ENCODE measurements at regions of chr14 and their contacts with region 1.

Region 1: DNA sequence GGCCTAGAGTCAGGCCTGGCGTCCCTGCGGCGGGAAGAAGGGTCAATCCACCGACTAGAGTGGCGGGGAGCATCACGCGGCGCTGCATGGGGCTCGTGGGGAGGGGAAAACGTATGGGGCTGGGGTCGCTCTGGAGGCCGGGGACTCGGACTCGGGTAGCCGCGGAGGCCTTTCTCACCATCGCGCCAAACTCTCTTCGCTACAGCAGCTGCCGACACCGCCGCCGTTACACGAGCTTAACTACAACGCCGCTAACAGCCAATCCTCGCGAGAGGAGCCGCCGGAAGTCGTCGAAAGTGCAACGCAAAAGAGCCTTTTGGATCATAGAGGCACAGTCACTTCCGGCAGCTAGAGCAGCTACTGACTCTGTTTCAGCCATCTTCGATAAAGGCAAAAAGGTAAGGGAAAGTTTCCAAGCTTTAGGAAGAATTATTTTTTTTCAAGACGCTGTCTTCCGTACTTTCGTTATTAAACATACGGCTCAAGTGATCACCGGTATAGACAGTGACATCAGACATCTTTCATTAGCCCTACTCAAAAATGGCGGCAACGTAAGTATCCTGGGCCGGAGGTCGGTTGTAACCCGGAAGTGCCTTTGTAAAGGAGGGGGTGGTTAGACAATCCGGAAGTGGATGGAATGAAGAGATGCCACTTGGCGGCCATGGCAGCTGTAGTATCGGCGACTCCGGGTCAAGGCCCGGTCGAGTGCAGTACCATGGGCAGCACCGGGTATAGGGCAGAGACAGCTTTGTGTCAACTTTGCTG is at the starts of genes ERH and SLC39A9:
- DNase-seq: peak; percentile 98
- H3K4me3 ChIP-seq: peak within 1 kb of the TSS; percentile 71 to 91 (median 84)
- H3K27ac ChIP-seq: peak within 1 kb of the TSS; percentile 88 to 94 (median 90)
- H3K4me1 ChIP-seq: peaks cover 0 to 55% (median 43%) of the 10 kb centered on the region in 4 donors
- H3K27me3 ChIP-seq: no peaks in the 10 kb centered on the region
- CTCF ChIP-seq: no peak
- EP300 ChIP-seq: peak in 1 of 4 donors; percentile 46
- POLR2A ChIP-seq: peak; percentile 29 to 65
- total RNA-seq, gene ERH: 65.6 to 106 (median 87.9) TPM
- total RNA-seq, gene SLC39A9: 39.0 to 47.4 (median 42.0) TPM

Region 2: DNA sequence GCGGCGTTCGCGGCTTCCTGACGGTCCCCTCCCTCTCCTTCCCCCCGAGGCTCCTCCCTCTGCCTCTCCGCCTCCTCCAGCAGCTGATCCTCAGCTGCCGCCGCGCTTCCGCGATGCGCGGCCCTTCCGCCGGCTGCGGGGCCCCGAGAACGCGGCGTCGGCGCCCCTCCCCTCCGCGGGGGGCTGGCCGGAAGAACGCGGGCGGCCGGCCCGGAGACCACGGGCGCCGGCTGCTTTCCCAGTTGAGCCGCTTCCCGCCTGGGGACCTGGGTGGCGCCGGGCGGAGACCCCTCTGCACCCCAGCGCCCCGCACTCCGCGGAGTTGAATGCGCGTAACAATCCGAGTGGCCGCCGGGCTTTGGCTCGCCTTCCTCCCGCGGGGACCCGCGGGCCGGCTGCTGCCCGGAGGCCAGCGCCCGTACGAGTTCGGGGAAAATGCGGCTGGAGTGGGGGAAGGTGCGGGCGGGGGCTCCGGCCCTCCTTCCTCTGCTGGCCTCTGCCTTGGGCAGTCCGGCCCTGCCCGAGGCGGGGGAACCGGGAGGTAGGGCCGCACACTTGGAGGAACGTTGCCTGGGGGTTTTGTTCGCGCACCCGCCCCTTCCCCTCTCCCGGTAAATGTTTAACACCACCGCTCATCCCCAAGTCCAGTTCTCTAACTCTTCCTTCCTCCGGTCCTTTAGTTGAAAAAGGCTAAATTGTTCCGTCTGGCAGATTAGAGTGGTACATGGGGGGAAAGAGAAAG is 244.9 kb before region 1 on chr14:
- intact Hi-C with region 1: loop called (anchors 10 kb)
- DNase-seq: peak; percentile 98
- H3K4me3 ChIP-seq: peak overlapping the region; percentile 72 to 93 (median 84)
- H3K27ac ChIP-seq: peak overlapping the region; percentile 96 to 99 (median 98)
- H3K4me1 ChIP-seq: peaks cover 0 to 40% (median 23%) of the 10 kb centered on the region in 4 donors
- H3K27me3 ChIP-seq: no peaks in the 10 kb centered on the region
- CTCF ChIP-seq: peak in 1 of 4 experiments; percentile 12
- EP300 ChIP-seq: peak in 1 of 4 donors; percentile 24
- POLR2A ChIP-seq: no peak

Region 3: GRCh38 chr14:69460093-69460701 is 62.0 kb after region 1 on chr14:
- intact Hi-C with region 1: loop called (anchors 2 kb)
- DNase-seq: peak; percentile 77
- H3K4me3 ChIP-seq: no peak overlapping the region
- H3K27ac ChIP-seq: peak overlapping the region in 2 of 4 donors; percentile 28 to 38
- H3K4me1 ChIP-seq: no peaks in the 10 kb centered on the region
- H3K27me3 ChIP-seq: no peaks in the 10 kb centered on the region
- CTCF ChIP-seq: peak; percentile 51 to 70 (median 66)
- EP300 ChIP-seq: no peak
- POLR2A ChIP-seq: no peak

Region 4: GRCh38 chr14:69766984-69767368 is 368.7 kb after region 1 on chr14 and contains the start of gene SRSF5:
- intact Hi-C with region 1: loop called (anchors 5 kb)
- DNase-seq: peak; percentile 99
- H3K4me3 ChIP-seq: peak within 1 kb of the TSS; percentile 72 to 99 (median 91)
- H3K27ac ChIP-seq: peak within 1 kb of the TSS; percentile 98 to 100 (median 100)
- H3K4me1 ChIP-seq: peaks cover 0 to 45% (median 41%) of the 10 kb centered on the region in 4 donors
- H3K27me3 ChIP-seq: no peaks in the 10 kb centered on the region
- CTCF ChIP-seq: no peak
- EP300 ChIP-seq: peak in 1 of 4 donors; percentile 14
- POLR2A ChIP-seq: peak; percentile 97 to 99
- total RNA-seq, gene SRSF5: 263 to 366 (median 303) TPM